Endothelial cell of umbilical vein (primary cell): ENCODE measurements at regions of chr10 and their contacts with region 1.

Region 1: DNA sequence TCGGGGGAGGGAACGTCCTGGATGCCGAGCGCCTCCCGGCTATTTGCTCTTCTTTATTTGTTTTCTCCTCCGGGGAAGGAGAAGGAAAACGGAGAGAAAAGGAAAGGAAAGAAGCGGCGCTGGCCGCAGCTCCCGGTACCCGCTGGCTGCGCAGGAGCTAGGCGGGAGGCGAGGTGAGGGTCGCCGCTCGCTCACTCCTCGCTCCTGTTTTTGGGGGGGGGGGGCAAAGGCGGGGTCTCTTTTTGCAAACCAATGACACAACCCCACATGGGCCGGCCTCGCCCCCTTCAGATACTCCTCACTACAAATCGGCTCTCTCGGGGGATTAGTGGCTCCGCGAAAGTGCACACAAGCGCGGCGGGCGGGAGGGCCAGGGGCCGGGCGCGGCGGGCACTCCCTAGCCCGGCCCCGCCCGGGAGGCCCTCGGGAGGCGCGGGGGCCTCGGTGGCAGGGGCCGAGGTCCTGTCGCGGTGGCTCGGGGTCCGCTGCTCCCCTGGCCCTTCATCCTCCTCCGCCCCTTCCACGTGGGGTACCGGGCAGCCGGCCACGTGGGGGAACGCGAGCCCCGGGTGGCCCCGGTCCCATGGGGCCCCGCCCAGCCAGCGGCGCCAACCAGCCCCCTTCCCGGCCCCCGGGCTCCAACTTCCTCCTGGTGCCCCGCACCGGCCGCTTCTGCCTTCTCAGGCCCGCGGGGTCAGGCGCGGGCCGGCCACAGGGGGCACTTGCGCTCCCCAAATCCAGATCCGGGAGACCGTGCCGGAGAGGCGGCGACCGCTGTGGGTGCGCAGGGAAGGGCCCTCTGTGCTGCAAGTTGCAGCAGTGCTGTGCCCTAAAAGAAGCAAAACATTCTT is 718 bp upstream of the CTBP2 start:
- DNase-seq: peak; percentile 81
- H3K4me3 ChIP-seq: peak overlapping the region; percentile 49 to 98 (median 77)
- H3K27ac ChIP-seq: peak overlapping the region; percentile 59
- H3K4me1 ChIP-seq: peaks cover 18% of the 10 kb centered on the region
- H3K27me3 ChIP-seq: no peaks in the 10 kb centered on the region
- CTCF ChIP-seq: peak; percentile 21 to 50
- POLR2A ChIP-seq: no peak

Region 2: DNA sequence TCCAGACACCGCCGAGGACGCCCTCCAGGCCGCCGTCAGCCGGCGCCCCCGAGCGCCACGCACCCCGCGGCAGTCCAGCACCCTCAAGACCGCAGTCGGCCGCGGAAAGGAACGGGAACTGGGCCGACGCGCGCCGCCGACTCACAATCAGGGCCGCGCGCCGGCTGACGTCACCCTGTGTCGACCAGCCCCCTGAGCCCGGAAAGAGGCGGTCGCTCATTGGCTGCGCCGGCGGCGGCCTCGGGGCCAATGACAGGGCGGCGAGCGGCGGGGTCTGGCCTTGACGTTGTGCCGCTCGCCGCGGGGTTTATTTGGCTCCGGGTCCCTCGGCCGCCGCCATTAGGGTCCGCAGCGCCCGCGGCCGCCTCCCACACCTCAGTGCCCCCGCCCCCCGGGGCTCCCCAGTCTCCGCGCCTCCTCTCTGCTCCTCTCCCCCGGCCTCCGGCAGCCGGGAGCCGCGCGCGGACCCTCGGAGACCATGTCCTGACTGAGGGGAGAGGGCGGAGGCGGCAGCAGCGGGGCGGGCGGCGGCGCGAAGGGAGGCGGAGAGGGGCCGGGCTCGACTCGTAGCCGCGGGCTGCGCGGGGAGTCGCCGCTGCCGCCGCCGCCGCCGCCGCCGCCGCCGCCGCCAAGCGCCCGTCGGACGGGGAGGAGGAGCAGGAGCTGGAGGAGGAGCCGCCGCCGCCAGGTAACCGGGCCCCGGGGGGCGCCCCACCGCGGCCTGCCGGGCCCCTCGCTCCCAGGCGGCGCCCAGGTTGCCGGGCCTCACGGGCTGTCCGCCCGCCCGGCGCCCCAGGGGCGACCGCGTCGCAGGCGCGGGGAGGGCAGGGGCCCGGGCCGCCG is 244.3 kb before region 1 on chr10:
- CTCF ChIA-PET with region 1: no interaction called
- POLR2A ChIA-PET with region 1: no interaction called
- dilution Hi-C with region 1: no loop called
- intact Hi-C with region 1: loop called (anchors 2 kb)
- DNase-seq: peak; percentile 97
- H3K4me3 ChIP-seq: peak overlapping the region; percentile 89 to 96 (median 92)
- H3K27ac ChIP-seq: peak overlapping the region; percentile 83
- H3K4me1 ChIP-seq: peaks cover 16% of the 10 kb centered on the region
- H3K27me3 ChIP-seq: no peaks in the 10 kb centered on the region
- CTCF ChIP-seq: no peak
- POLR2A ChIP-seq: peak; percentile 96

Region 3: GRCh38 chr10:125343118-125343925 is 182.2 kb after region 1 on chr10:
- CTCF ChIA-PET with region 1: no interaction called
- POLR2A ChIA-PET with region 1: no interaction called
- dilution Hi-C with region 1: no loop called
- intact Hi-C with region 1: loop called (anchors 2 kb)
- DNase-seq: peak; percentile 51
- H3K4me3 ChIP-seq: no peak overlapping the region
- H3K27ac ChIP-seq: no peak overlapping the region
- H3K4me1 ChIP-seq: no peaks in the 10 kb centered on the region
- H3K27me3 ChIP-seq: peaks cover 4 to 6% of the 10 kb centered on the region in 2 experiments
- CTCF ChIP-seq: peak; percentile 47 to 54
- POLR2A ChIP-seq: no peak

Region 4: DNA sequence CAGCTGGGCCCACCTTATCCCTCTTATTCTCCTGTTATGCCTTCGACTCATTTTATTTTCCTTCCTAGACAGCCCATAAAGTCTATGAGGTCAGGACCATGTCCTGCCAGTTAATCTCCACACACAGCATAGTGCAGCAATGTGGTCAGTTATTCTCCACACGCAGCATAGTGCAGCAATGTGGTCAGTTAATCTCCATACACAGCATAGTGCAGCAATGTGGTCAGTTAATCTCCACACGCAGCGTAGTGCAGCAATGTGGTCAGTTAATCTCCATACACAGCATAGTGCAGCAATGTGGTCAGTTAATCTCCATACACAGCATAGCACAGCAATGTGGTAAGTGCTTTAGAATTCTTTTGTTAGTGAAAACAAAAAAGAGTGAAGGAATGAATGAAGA is 444.1 kb after region 1 on chr10:
- CTCF ChIA-PET with region 1: no interaction called
- POLR2A ChIA-PET with region 1: no interaction called
- dilution Hi-C with region 1: no loop called
- intact Hi-C with region 1: loop called (anchors 2 kb)
- DNase-seq: peak; percentile 21
- H3K4me3 ChIP-seq: no peak overlapping the region
- H3K27ac ChIP-seq: no peak overlapping the region
- H3K4me1 ChIP-seq: peaks cover 28% of the 10 kb centered on the region
- H3K27me3 ChIP-seq: peaks cover 0 to 2% of the 10 kb centered on the region in 2 experiments
- CTCF ChIP-seq: no peak
- POLR2A ChIP-seq: no peak

Region 5: DNA sequence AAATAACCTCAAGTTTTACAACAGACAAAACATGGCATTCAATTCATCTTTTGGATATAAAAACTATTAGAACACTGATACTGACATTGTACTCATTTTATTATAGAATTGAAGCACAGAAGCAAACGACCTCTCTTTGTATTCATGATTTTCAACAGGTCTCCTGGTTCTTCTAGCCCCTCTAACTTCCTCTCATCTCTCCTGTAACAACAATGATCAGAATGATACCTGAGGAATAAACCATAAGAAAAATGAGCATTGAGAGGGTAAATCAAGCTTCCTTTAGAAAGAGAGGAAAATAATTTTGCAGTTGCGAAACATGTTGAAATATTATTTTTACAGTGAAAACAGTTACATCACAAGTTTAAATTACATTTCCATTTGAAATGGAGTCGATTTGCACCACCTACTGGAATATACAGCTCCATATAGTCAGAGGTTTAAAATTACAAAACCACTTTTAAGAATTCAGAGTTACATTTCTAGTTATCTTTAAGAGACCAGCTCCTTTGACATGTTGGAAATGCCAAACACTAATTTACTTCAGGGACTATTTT is 539.4 kb after region 1 on chr10:
- CTCF ChIA-PET with region 1: no interaction called
- POLR2A ChIA-PET with region 1: no interaction called
- dilution Hi-C with region 1: no loop called
- intact Hi-C with region 1: loop called (anchors 5 kb)
- DNase-seq: peak; percentile 27
- H3K4me3 ChIP-seq: no peak overlapping the region
- H3K27ac ChIP-seq: no peak overlapping the region
- H3K4me1 ChIP-seq: no peaks in the 10 kb centered on the region
- H3K27me3 ChIP-seq: peaks cover 0 to 8% of the 10 kb centered on the region in 2 experiments
- CTCF ChIP-seq: no peak
- POLR2A ChIP-seq: no peak